HEK293 (cell line): ENCODE measurements at regions of chr3 and their contacts with region 1.

Region 1: DNA sequence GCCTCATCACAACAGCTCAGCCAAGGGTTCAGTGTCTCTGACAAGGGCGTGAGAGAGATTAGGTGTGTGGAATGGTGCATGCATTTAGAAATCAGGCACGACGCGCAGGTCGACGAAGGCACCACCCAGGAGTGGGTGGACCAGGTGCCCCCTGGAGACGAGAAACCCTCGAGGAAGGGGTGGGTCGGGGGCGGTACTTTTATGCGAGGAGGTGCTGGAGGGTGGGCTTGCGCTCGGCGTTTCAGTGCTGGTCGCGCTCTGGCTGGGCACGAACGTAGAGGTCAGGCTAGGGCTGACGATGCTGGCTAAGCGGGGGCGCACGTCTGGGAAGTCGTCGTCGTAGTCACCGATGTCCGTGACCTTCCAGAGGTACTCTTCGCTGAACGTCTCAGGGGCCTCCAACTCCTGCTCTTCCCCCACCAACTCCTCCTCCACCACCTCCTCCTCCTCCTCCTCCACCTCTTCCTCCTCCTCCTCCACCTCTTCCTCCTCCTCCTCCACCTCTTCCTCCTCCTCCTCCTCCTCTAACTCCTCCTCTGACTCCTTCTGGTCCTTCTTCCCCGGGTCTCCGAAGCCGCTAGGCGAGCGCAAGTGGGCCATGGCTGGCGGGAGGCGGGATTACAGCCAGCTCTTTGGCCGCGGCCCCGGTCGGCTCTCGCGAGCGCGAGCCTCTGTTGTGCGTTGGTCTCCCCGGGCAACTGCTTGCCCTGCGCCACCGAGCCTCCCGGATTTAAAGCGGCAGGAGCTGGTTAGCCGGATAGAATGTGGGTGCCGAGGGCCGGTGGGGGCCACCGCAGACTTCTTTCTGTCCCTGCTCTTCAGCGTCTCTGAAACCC is at the start of gene ERICH6:
- H3K4me3 ChIP-seq: peak within 1 kb of the TSS; percentile 62
- H3K27ac ChIP-seq: no peak within 1 kb of the TSS; the same call in 1 of the 2 replicates
- H3K4me1 ChIP-seq: no peaks in the 10 kb centered on the region
- CTCF ChIP-seq: no peak; the same call in 1 of the 2 replicates

Region 2: GRCh38 chr3:150594150-150594549 is 109.4 kb before region 1 on chr3:
- CTCF ChIA-PET with region 1: no interaction called
- POLR2A ChIA-PET with region 1: no interaction called
- H3K4me3 ChIP-seq: no peak overlapping the region
- H3K27ac ChIP-seq: no peak overlapping the region
- H3K4me1 ChIP-seq: no peaks in the 10 kb centered on the region
- CTCF ChIP-seq: no peak

Region 3: DNA sequence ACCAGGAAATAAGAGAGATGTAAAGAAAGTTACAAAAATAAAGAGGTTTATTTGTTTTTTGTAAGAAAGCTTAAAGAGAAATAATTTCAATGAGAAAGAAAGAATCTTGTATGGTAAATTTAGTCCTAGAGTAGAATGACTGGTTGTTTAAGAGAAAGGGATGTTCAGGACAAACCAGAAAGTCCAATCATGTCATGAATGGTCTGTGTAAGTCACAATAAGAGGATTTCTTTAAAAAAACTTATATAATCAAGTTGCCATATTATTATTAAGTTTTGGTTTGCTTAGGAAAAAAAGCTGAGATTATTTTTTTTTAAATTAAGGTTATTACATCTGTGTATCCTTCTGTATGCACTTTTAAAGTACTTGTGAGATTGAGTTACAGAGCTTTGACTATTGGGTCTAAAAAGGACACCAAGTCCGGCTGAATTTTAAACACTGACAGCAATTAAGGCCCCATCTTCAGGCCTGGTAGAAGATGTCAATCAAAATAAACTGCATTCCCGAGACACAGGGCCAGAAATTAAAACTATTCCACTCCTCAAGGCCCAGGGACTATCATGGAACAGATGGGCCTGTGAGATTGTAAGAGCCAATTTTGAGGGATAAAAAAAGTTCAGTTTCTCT is 12.0 kb before region 1 on chr3:
- CTCF ChIA-PET with region 1: no interaction called
- POLR2A ChIA-PET with region 1: no interaction called
- H3K4me3 ChIP-seq: no peak overlapping the region
- H3K27ac ChIP-seq: no peak overlapping the region
- H3K4me1 ChIP-seq: no peaks in the 10 kb centered on the region
- CTCF ChIP-seq: no peak

Region 4: DNA sequence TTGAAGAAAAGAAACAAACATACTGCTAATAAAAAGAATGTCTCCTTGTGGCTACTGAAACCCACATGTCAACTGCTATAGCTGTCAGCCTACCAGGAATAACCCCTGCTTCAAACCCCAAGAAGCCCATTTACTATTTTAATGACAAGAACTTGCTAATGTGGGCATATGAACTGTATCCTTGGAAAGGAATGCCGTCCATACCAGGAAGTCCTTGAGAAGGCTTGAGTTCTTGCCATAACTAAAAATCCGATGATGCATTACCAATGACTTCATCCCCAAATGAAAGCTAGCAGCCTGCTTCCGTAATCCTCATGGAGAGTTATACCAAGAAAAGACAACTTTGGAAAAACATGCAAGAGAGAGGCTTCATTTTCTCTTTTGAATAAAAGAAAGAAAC is 166.9 kb after region 1 on chr3:
- CTCF ChIA-PET with region 1: no interaction called
- POLR2A ChIA-PET with region 1: interaction called, 11 read pairs
- H3K4me3 ChIP-seq: no peak overlapping the region
- H3K27ac ChIP-seq: no peak overlapping the region
- H3K4me1 ChIP-seq: no peaks in the 10 kb centered on the region
- CTCF ChIP-seq: no peak

Region 5: GRCh38 chr3:150899141-150899540 is 195.6 kb after region 1 on chr3:
- CTCF ChIA-PET with region 1: no interaction called
- POLR2A ChIA-PET with region 1: no interaction called
- H3K4me3 ChIP-seq: no peak overlapping the region
- H3K27ac ChIP-seq: no peak overlapping the region
- H3K4me1 ChIP-seq: no peaks in the 10 kb centered on the region
- CTCF ChIP-seq: no peak